CD4-positive, alpha-beta T cell (primary cell): ENCODE measurements at regions of chr17 and their contacts with region 1.

Region 1: DNA sequence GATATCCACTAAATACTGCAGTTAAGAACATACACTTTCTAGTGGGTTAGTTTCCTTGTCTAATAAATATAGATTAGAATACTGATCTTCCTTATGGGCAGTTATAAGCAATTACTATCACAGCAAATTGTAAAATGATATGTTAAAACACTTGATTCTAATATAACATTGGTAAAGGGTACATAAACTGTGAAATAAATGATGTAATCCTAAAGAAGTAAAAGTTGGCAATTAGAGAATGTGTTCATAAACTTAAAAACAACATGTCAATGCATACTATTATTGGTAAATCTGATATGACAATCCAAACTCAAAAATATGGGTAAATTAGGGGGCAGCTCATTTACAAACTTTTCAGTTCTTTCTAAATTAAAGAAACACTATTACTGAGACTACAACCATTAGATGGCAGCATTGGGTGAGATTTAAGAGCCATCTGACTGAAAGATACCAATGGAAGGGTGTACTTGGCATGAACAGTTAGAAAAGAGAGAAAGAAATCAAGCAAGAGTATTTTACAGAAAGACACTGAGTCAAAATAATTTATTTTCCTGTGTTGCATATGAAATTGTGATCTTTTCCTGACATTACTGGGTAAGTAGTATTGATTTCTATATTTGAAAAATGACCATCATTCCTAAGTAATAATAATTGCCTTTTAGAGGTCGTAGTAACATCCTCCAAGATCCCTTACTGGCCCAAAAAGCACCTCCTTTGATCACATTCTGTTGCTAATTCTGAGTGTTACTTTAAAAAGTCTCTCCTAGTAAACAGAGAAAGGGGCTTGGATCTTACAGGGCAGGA is 119.6 kb downstream of the SPAG9 start:
- DNase-seq: peak in 5 of 14 experiments; percentile 2 to 80 (median 79)
- ATAC-seq: peak; percentile 93
- H3K4me3 ChIP-seq: no peak overlapping the region
- H3K4me3 Mint-ChIP-seq: no peak overlapping the region
- H3K27ac ChIP-seq: no peak overlapping the region
- H3K27ac Mint-ChIP-seq: no peak overlapping the region
- H3K4me1 ChIP-seq: no peaks in the 10 kb centered on the region
- H3K4me1 Mint-ChIP-seq: peaks cover 7% of the 10 kb centered on the region
- H3K27me3 ChIP-seq: no peaks in the 10 kb centered on the region
- H3K27me3 Mint-ChIP-seq: no peaks in the 10 kb centered on the region
- CTCF ChIP-seq: peak; percentile 73

Region 2: GRCh38 chr17:50949989-50950881 is 50.8 kb before region 1 on chr17:
- CTCF ChIA-PET with region 1: no interaction called
- POLR2A ChIA-PET with region 1: no interaction called
- intact Hi-C with region 1: no loop called
- DNase-seq: peak; percentile 32 to 80 (median 54)
- ATAC-seq: peak; percentile 84
- H3K4me3 ChIP-seq: no peak overlapping the region
- H3K4me3 Mint-ChIP-seq: no peak overlapping the region
- H3K27ac ChIP-seq: no peak overlapping the region
- H3K27ac Mint-ChIP-seq: peak overlapping the region; percentile 42
- H3K4me1 ChIP-seq: peaks cover 33% of the 10 kb centered on the region
- H3K4me1 Mint-ChIP-seq: peaks cover 34% of the 10 kb centered on the region
- H3K27me3 ChIP-seq: no peaks in the 10 kb centered on the region
- H3K27me3 Mint-ChIP-seq: no peaks in the 10 kb centered on the region
- CTCF ChIP-seq: peak; percentile 68

Region 3: GRCh38 chr17:51056813-51057510 is 55.9 kb after region 1 on chr17:
- CTCF ChIA-PET with region 1: no interaction called
- POLR2A ChIA-PET with region 1: no interaction called
- intact Hi-C with region 1: loop called (anchors 1 to 2 kb)
- DNase-seq: peak in 9 of 14 experiments; percentile 3 to 62 (median 12)
- ATAC-seq: no peak
- H3K4me3 ChIP-seq: no peak overlapping the region
- H3K4me3 Mint-ChIP-seq: no peak overlapping the region
- H3K27ac ChIP-seq: no peak overlapping the region
- H3K27ac Mint-ChIP-seq: no peak overlapping the region
- H3K4me1 ChIP-seq: no peaks in the 10 kb centered on the region
- H3K4me1 Mint-ChIP-seq: peaks cover 17% of the 10 kb centered on the region
- H3K27me3 ChIP-seq: no peaks in the 10 kb centered on the region
- H3K27me3 Mint-ChIP-seq: no peaks in the 10 kb centered on the region
- CTCF ChIP-seq: peak; percentile 53

Region 4: DNA sequence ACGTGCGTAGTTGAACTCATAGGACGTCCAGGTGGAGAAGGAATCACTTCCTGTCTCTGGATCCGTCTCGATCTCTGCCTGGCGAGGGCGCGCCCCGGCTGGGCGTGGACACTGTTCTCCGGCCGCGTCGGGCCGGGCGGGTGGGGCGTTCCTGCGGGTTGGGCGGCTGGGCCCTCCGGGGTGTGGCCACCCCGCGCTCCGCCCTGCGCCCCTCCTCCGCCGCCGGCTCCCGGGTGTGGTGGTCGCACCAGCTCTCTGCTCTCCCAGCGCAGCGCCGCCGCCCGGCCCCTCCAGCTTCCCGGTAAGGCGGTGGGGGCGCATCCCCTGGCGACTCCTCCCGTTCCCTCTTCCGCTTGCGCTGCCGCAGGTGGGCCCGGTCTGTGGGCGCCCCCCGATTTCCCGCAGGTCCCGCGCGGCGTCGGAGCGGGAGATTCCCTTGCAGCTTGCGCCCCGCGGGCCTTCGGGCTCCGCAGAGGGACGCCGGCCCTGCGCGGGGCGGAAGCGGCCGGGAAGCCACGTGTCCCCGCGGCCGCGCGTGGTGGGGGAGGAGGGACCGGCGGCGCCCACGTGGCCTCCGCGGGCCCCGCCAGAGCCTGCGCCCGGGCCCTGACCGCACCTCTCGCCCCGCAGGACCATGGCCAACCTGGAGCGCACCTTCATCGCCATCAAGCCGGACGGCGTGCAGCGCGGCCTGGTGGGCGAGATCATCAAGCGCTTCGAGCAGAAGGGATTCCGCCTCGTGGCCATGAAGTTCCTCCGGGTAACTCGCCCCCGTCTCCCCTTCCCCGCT is 165.4 kb after region 1 on chr17 and contains the start of gene NME2:
- CTCF ChIA-PET with region 1: interaction called, 4 read pairs
- POLR2A ChIA-PET with region 1: no interaction called
- intact Hi-C with region 1: loop called in 1 of 2 experiments (anchors 5 kb)
- DNase-seq: peak; percentile 24 to 83 (median 50)
- ATAC-seq: peak; percentile 69
- H3K4me3 ChIP-seq: peak within 1 kb of the TSS; percentile 76
- H3K4me3 Mint-ChIP-seq: peak within 1 kb of the TSS; percentile 95
- H3K27ac ChIP-seq: peak within 1 kb of the TSS; percentile 50 to 70
- H3K27ac Mint-ChIP-seq: peak within 1 kb of the TSS; percentile 93
- H3K4me1 ChIP-seq: peaks cover 20% of the 10 kb centered on the region
- H3K4me1 Mint-ChIP-seq: peaks cover 20% of the 10 kb centered on the region
- H3K27me3 ChIP-seq: no peaks in the 10 kb centered on the region
- H3K27me3 Mint-ChIP-seq: no peaks in the 10 kb centered on the region
- CTCF ChIP-seq: no peak
- total RNA-seq, gene NME2: 135 to 138 TPM

Region 5: GRCh38 chr17:51260125-51260880 is 259.3 kb after region 1 on chr17 and contains the start of gene UTP18:
- CTCF ChIA-PET with region 1: no interaction called
- POLR2A ChIA-PET with region 1: no interaction called
- intact Hi-C with region 1: loop called (anchors 5 to 10 kb)
- DNase-seq: peak; percentile 89 to 99 (median 96)
- ATAC-seq: peak; percentile 87
- H3K4me3 ChIP-seq: peak within 1 kb of the TSS; percentile 90
- H3K4me3 Mint-ChIP-seq: peak within 1 kb of the TSS; percentile 99
- H3K27ac ChIP-seq: peak within 1 kb of the TSS; percentile 96 to 99
- H3K27ac Mint-ChIP-seq: peak within 1 kb of the TSS; percentile 99
- H3K4me1 ChIP-seq: peaks cover 36% of the 10 kb centered on the region
- H3K4me1 Mint-ChIP-seq: peaks cover 85% of the 10 kb centered on the region
- H3K27me3 ChIP-seq: no peaks in the 10 kb centered on the region
- H3K27me3 Mint-ChIP-seq: no peaks in the 10 kb centered on the region
- CTCF ChIP-seq: no peak
- total RNA-seq, gene UTP18: 48.5 to 49.8 TPM